ENCODE measurements at regions of chr10 and their contacts with region 1.

Region 1: GRCh38 chr10:112471878-112472487 is 25.0 kb downstream of the VTI1A start:
- DNase-seq: no peak
- H3K4me3 Mint-ChIP-seq: no peak overlapping the region
- H3K27ac Mint-ChIP-seq: no peak overlapping the region
- H3K4me1 Mint-ChIP-seq: peaks cover 4% of the 10 kb centered on the region
- H3K27me3 Mint-ChIP-seq: no peaks in the 10 kb centered on the region

Region 2: GRCh38 chr10:112140110-112140970 is 331.6 kb before region 1 on chr10:
- intact Hi-C with region 1: loop called (anchors 1 kb)
- DNase-seq: peak; percentile 65
- H3K4me3 Mint-ChIP-seq: no peak overlapping the region
- H3K27ac Mint-ChIP-seq: no peak overlapping the region
- H3K4me1 Mint-ChIP-seq: no peaks in the 10 kb centered on the region
- H3K27me3 Mint-ChIP-seq: peaks cover 2% of the 10 kb centered on the region

Region 3: GRCh38 chr10:112434988-112435619 is 36.9 kb before region 1 on chr10:
- intact Hi-C with region 1: loop called (anchors 5 kb)
- DNase-seq: no peak
- H3K4me3 Mint-ChIP-seq: no peak overlapping the region
- H3K27ac Mint-ChIP-seq: no peak overlapping the region
- H3K4me1 Mint-ChIP-seq: no peaks in the 10 kb centered on the region
- H3K27me3 Mint-ChIP-seq: no peaks in the 10 kb centered on the region

Region 4: DNA sequence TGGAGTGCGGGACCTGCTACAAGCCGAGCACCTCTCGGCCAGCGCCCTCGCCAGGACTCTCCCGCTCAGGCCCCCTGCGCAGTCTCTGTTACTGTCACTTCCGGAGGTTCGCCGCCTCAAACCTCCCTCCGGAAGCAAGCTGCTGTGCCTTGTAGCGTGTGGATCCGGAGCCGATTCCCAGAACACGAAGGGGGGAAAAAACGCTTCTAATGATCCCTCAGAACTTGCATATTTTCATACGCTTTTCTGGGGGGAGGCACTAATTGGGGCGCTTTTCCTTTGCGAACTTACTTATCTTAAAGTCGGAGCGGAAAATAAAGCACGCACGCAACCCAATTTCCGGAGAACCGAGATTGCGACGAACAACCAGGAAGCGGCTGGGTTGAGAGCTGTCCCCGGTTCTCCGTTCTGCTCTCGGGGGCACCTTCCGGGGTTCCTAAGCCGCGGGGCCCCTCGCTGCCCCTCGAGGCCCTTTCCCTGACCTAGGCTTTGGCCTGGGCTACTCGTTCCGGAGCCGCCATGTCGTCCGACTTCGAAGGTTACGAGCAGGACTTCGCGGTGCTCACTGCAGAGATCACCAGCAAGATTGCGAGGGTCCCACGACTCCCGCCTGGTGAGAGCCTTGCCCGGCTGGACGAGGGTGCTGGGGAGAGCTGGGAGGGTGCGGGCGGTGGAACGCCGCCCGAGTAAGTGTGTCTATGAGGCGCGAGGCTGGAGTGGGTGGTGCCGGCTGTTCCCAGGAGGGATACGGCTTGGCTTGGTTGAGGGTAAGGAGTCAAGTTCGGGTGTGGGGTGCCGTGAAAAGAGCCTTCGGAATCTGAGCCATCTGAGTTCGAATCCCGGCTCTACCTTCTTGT is 24.9 kb before region 1 on chr10 and contains the starts of genes VTI1A and ZDHHC6:
- intact Hi-C with region 1: loop called (anchors 2 kb)
- DNase-seq: peak; percentile 80
- H3K4me3 Mint-ChIP-seq: peak within 1 kb of the TSS; percentile 97
- H3K27ac Mint-ChIP-seq: peak within 1 kb of the TSS; percentile 93
- H3K4me1 Mint-ChIP-seq: peaks cover 39% of the 10 kb centered on the region
- H3K27me3 Mint-ChIP-seq: no peaks in the 10 kb centered on the region
- total RNA-seq, gene VTI1A: 33.6 and 39.5 TPM in 2 replicates
- total RNA-seq, gene ZDHHC6: 42.9 and 43.2 TPM in 2 replicates

Region 5: DNA sequence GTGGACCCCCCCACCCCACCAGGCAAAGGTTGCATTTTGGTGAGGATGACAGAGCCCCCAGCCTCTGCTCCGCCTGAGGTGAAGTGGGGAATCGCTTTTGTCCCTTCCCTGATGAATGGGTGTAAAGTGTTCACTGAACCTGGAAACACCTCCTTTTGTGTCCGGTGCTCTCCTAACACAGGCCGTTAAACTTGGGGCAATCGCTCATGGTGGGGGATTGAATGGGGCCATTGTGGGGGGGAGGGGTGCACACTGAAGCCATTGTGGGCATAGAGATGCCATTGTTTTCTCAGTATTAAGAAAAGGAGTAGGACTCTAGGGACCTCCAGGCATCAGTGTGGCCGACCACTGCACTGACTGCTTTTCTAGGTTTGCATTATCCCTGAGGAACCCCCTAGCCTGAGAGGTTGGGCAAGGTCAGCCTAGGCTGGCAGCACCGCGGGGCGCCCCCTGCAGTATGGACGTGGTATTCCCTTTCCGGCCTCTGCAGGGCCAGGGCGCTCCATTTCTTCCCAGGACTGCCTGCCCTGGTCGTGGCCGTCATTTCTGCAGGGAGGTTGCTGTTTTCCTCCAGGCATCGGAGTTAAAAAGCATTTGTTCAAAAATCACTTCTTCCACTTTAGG is 636.3 kb after region 1 on chr10:
- intact Hi-C with region 1: loop called (anchors 10 kb)
- DNase-seq: no peak
- H3K4me3 Mint-ChIP-seq: no peak overlapping the region
- H3K27ac Mint-ChIP-seq: no peak overlapping the region
- H3K4me1 Mint-ChIP-seq: no peaks in the 10 kb centered on the region
- H3K27me3 Mint-ChIP-seq: peaks cover 19% of the 10 kb centered on the region